Activated CD4-positive, alpha-beta memory T cell treated with anti-CD3 and anti-CD28 coated beads, Interleukin-2, amount 10 ng/mL, durations not matched to agents 7 days and 5 days (primary cell): ENCODE measurements at regions of chr16 and their contacts with region 1.

Region 1: GRCh38 chr16:56700195-56700594 is 17.9 kb downstream of the MT1X start:
- DNase-seq: no peak
- H3K4me3 Mint-ChIP-seq: no peak overlapping the region
- H3K27ac Mint-ChIP-seq: no peak overlapping the region
- H3K4me1 Mint-ChIP-seq: peaks cover 8% of the 10 kb centered on the region
- H3K27me3 Mint-ChIP-seq: peaks cover 4% of the 10 kb centered on the region

Region 2: DNA sequence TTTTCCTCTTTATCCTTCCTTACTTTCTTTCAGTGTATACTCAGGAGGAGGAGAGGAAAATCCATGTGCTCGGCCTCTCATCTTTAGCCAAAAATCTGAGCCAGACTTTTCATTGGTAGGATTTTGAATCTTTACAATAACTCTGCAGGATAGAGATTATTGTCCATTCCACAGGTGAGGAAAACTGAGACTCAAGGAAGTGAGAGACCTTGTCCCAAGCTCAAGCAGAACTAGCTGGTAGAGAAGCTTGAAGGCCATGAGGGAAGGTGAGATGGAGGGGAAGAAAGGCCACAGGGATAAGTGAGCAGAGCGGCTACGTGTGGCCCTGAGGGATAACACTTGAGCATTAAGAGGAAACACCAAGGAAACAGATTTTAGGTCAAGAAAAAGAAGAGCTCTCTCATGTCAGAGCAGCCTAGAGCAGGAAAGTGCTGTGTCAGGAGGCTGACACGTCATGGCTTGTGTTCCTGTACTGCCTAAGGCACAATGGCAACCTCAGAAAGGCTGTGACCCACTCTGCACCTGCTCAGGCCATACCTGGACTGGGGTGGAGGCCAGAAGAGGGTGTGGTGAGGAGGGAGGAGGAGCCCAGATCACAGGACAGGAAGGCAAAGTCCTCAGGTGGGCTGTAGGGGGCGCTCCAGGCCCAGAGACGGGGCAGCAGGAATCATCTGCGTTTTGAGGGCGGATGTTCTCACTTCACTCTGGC is 123.5 kb before region 1 on chr16:
- CTCF ChIA-PET with region 1: interaction called, 107 read pairs
- POLR2A ChIA-PET with region 1: interaction called, 19 read pairs
- DNase-seq: peak; percentile 91
- H3K4me3 Mint-ChIP-seq: no peak overlapping the region
- H3K27ac Mint-ChIP-seq: no peak overlapping the region
- H3K4me1 Mint-ChIP-seq: peaks cover 8% of the 10 kb centered on the region
- H3K27me3 Mint-ChIP-seq: peaks cover 14% of the 10 kb centered on the region

Region 3: DNA sequence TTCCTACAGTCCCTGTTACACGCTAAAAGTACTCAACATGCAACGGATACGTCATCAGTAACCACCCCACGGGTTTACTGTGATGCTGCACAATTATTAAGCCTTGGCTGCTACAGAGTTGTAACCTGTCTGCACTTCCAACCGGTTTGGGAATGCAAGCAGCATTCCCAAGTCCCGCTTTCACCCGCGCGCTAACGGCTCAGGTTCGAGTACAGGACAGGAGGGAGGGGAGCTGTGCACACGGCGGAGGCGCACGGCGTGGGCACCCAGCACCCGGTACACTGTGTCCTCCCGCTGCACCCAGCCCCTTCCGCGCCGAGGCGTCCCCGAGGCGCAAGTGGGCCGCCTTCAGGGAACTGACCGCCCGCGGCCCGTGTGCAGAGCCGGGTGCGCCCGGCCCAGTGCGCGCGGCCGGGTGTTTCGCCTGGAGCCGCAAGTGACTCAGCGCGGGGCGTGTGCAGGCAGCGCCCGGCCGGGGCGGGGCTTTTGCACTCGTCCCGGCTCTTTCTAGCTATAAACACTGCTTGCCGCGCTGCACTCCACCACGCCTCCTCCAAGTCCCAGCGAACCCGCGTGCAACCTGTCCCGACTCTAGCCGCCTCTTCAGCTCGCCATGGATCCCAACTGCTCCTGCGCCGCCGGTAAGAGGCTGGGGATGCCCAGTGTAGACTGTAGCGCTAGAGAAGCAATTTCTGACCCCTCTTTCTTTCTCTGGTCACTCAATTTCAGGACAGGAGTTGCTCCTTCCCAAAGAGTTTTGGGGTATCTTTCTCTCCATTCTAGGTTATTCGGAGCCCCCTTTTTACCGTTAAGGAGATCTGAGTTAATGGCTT is 91.9 kb before region 1 on chr16 and contains the start of gene MT2A:
- CTCF ChIA-PET with region 1: interaction called, 12 read pairs
- POLR2A ChIA-PET with region 1: interaction called, 7 read pairs
- DNase-seq: peak; percentile 93
- H3K4me3 Mint-ChIP-seq: peak within 1 kb of the TSS; percentile 93
- H3K27ac Mint-ChIP-seq: peak within 1 kb of the TSS; percentile 78
- H3K4me1 Mint-ChIP-seq: peaks cover 43% of the 10 kb centered on the region
- H3K27me3 Mint-ChIP-seq: peaks cover 2% of the 10 kb centered on the region
- total RNA-seq, gene MT2A: 47.9 to 51.4 TPM

Region 4: GRCh38 chr16:56643080-56643778 is 57.0 kb before region 1 on chr16:
- CTCF ChIA-PET with region 1: interaction called, 32 read pairs
- POLR2A ChIA-PET with region 1: no interaction called
- DNase-seq: peak; percentile 85
- H3K4me3 Mint-ChIP-seq: peak overlapping the region; percentile 58
- H3K27ac Mint-ChIP-seq: no peak overlapping the region
- H3K4me1 Mint-ChIP-seq: peaks cover 24% of the 10 kb centered on the region
- H3K27me3 Mint-ChIP-seq: peaks cover 68% of the 10 kb centered on the region

Region 5: GRCh38 chr16:56681939-56682702 is 18.1 kb before region 1 on chr16 and contains the start of gene MT1X:
- CTCF ChIA-PET with region 1: interaction called, 30 read pairs
- POLR2A ChIA-PET with region 1: interaction called, 20 read pairs
- DNase-seq: peak; percentile 95
- H3K4me3 Mint-ChIP-seq: peak within 1 kb of the TSS; percentile 89
- H3K27ac Mint-ChIP-seq: peak within 1 kb of the TSS; percentile 92
- H3K4me1 Mint-ChIP-seq: peaks cover 30% of the 10 kb centered on the region
- H3K27me3 Mint-ChIP-seq: no peaks in the 10 kb centered on the region
- total RNA-seq, gene MT1X: 28.4 to 33.1 TPM

Region 6: DNA sequence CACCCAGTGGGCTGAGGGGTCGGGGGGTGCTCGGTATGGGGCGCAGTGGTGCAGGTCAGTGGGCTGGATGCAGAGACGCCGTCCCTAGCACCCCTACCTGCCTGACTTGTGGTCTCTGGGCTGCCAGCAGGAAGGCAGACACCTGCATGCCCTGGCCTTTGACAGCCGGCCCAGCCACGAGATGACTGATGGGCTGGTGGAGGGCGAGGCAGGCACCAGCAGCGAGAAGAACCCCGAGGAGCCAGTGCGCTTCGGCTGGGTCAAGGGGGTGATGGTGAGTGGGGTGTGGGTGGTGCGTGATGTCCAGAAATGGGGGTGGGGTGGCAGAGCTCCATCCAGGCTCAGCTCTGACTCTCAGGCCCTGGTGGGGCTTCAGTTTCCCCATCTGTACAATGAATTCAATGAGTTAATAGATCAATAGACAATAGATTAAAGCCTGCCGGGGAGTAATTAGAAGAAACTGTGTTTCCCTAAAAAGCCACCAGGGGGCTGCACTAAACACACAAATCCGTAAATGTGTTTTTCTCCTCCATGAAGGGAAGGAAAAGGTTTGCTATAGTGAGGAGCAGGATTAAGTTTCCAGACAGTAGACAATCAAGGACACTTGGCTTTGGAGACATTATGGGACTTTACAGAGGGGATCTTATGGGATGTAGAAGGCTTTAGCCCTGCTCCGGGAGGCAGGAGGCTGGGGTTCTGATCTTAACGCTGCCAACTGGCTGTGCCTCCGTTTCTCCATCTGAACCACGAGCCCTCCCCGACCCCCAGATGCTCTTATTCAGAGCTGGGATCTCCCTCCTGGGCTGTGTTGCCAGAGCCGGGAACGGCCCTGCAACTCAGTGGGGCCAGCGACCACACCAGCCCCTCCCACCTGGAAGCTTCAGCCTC is 167.0 kb after region 1 on chr16:
- CTCF ChIA-PET with region 1: interaction called, 11 read pairs
- POLR2A ChIA-PET with region 1: no interaction called
- DNase-seq: peak; percentile 45
- H3K4me3 Mint-ChIP-seq: no peak overlapping the region
- H3K27ac Mint-ChIP-seq: no peak overlapping the region
- H3K4me1 Mint-ChIP-seq: peaks cover 16% of the 10 kb centered on the region
- H3K27me3 Mint-ChIP-seq: no peaks in the 10 kb centered on the region

Region 7: GRCh38 chr16:56931892-56932720 is 231.9 kb after region 1 on chr16 and contains the start of gene HERPUD1:
- CTCF ChIA-PET with region 1: no interaction called
- POLR2A ChIA-PET with region 1: no interaction called
- DNase-seq: peak; percentile 99
- H3K4me3 Mint-ChIP-seq: peak within 1 kb of the TSS; percentile 98
- H3K27ac Mint-ChIP-seq: peak within 1 kb of the TSS; percentile 96
- H3K4me1 Mint-ChIP-seq: peaks cover 38% of the 10 kb centered on the region
- H3K27me3 Mint-ChIP-seq: peaks cover 2% of the 10 kb centered on the region
- total RNA-seq, gene HERPUD1: 166 to 171 TPM